Activated CD4-positive, alpha-beta memory T cell treated with anti-CD3 and anti-CD28 coated beads for 36 hours (primary cell): ENCODE measurements at regions of chr20 and their contacts with region 1.

Region 1: GRCh38 chr20:63873477-63873971 is 8.5 kb downstream of the TPD52L2 start:
- DNase-seq: peak; percentile 77
- H3K4me3 Mint-ChIP-seq: peak overlapping the region; percentile 26
- H3K27ac Mint-ChIP-seq: peak overlapping the region; percentile 91
- H3K4me1 Mint-ChIP-seq: peaks cover 12% of the 10 kb centered on the region
- H3K27me3 Mint-ChIP-seq: no peaks in the 10 kb centered on the region

Region 2: DNA sequence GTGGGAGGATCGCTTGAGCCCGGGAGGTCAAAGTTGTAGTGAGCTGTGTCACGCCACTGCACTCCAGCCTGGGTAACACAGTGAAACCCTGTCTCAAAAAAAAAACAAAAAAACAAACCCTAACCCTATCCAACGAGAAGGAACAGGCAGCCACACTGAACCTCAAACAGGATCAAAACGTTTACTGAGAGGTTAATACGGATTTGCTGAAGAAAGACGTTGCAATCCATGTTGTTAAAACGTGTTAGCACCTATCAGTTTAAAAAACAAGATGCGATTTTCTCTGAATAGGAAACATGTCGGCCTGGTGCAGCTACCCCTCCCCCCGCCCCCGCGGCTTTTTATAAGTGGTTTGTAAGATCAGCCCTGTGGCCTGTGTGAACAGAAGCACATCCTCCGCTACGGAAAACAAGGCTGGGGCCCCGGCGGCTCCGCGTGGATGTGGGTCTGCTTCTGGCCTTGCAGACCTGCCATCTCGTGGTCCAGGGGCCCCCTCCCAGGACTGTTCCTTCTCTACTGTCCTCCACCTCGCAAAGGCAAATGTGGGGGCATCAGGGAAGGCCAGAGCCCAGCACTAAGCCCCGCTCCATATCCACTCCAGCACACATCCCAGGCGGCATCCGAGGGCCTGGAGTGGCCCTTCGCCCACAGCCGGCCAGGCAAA is 122.6 kb before region 1 on chr20:
- CTCF ChIA-PET with region 1: no interaction called
- POLR2A ChIA-PET with region 1: no interaction called
- intact Hi-C with region 1: no loop called
- DNase-seq: peak; percentile 76
- H3K4me3 Mint-ChIP-seq: peak overlapping the region; percentile 52
- H3K27ac Mint-ChIP-seq: peak overlapping the region; percentile 85
- H3K4me1 Mint-ChIP-seq: peaks cover 15% of the 10 kb centered on the region
- H3K27me3 Mint-ChIP-seq: no peaks in the 10 kb centered on the region

Region 3: GRCh38 chr20:63894358-63895201 is 21.1 kb after region 1 on chr20 and contains the start of gene DNAJC5:
- CTCF ChIA-PET with region 1: interaction called, 3 read pairs
- POLR2A ChIA-PET with region 1: interaction called, 4 read pairs
- intact Hi-C with region 1: loop called (anchors 2 kb)
- DNase-seq: peak; percentile 97
- H3K4me3 Mint-ChIP-seq: peak within 1 kb of the TSS; percentile 97
- H3K27ac Mint-ChIP-seq: peak within 1 kb of the TSS; percentile 97
- H3K4me1 Mint-ChIP-seq: peaks cover 37% of the 10 kb centered on the region
- H3K27me3 Mint-ChIP-seq: no peaks in the 10 kb centered on the region
- total RNA-seq, gene DNAJC5: 33.7 to 33.8 TPM

Region 4: DNA sequence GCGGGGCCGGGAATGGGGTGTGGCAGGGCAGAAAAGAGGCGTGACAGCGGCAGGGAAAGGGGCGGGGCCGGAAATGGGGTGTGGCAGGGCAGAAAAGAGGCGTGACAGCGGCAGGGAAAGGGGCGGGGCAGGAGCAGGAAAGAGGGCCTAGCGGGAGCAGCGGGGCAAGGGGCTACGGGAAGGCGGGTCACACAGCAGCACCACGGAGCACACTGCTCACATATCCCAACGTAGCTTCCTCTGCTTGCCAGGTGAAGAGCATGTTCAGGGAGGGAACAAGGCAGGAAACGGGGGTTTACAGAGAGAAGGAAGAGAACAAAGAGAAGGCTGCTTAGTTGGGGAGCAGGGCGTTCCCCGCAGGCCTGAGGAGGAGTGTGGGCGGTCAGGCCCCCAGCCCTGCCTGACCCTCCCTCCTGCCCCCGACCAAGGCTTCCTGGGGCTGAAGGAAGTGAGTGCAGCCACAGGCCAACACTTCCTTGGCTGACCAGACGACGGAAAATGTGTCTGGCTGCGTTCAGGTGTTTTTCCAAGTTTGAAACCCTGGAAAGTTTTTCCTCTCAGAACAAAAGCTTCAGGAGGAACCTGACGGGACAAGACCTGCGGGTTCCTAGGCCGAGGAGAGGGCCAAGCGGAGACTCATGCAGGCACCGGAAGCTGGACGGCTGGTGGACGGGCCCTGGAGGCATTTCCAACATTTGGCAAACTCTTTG is 68.9 kb after region 1 on chr20:
- CTCF ChIA-PET with region 1: no interaction called
- POLR2A ChIA-PET with region 1: no interaction called
- intact Hi-C with region 1: no loop called
- DNase-seq: peak; percentile 63
- H3K4me3 Mint-ChIP-seq: no peak overlapping the region
- H3K27ac Mint-ChIP-seq: peak overlapping the region; percentile 77
- H3K4me1 Mint-ChIP-seq: peaks cover 12% of the 10 kb centered on the region
- H3K27me3 Mint-ChIP-seq: no peaks in the 10 kb centered on the region